ENCODE measurements at regions of chr15 and their contacts with region 1.

Region 1: DNA sequence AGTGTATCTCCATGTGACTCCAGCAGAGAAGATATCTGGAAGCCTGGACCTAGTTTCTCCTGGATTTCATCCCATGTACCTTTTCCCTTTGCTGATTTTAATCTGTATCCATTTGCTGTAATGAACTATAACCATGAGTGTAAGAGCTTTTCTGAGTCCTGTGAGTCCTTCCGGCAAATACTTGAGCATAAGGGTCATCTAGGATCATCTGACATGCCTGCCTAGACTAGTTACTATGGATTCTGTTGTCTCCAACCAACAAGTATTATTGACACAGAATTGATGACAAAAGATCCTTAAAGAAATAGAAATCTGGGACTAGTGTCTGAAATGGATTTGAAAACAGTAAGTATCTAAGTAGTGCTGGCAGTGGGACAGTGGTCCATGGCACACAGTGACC is 11.3 kb upstream of the UBE3A start:
- DNase-seq: no peak
- H3K4me3 ChIP-seq: no peak overlapping the region
- H3K27ac ChIP-seq: no peak overlapping the region
- H3K4me1 ChIP-seq: no peaks in the 10 kb centered on the region
- H3K27me3 ChIP-seq: no peaks in the 10 kb centered on the region
- CTCF ChIP-seq: no peak
- EP300 ChIP-seq: no peak
- POLR2A ChIP-seq: no peak

Region 2: DNA sequence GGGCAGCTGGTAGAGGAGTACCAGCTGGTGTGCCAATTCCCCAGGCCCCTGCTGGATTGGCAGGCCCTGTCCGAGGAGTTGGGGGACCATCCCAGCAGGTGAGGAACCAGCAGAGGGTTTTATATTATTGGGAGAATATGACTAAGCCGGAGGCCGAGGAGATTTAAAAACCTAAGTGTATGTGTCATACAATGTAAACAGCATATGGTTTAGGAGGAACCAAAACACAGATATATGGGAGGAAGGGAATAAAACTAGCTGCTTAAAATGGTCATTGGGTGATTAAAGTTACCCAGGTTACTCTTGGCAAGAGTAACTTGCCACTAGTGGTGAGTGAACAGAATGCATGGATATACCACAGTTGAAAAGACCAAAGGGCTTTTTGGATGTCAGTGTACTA is 473.2 kb before region 1 on chr15:
- intact Hi-C with region 1: no loop called
- DNase-seq: no peak
- H3K4me3 ChIP-seq: no peak overlapping the region
- H3K27ac ChIP-seq: no peak overlapping the region
- H3K4me1 ChIP-seq: no peaks in the 10 kb centered on the region
- H3K27me3 ChIP-seq: no peaks in the 10 kb centered on the region
- CTCF ChIP-seq: no peak
- EP300 ChIP-seq: no peak
- POLR2A ChIP-seq: no peak

Region 3: DNA sequence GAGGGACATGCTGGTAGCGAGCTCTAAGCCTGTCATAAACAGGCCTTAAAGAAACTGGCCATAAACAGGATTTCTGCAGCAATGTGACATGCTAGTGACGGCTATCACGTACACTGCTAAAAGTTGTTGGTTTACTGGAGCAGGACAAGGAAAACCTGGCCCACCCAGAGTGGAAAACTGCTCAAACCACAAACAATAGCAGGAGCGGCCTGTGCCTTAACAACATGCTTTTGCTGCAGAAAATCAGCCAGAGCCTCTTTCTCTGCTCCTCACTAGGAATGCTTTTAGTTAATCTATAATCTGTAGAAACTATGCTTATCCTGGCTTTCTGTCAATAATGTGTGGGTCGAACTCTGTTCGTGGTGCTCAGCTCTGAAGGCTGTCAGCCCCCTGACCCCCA is 191.6 kb after region 1 on chr15:
- intact Hi-C with region 1: loop called in 1 of 4 experiments (anchors 10 kb)
- DNase-seq: no peak
- H3K4me3 ChIP-seq: no peak overlapping the region
- H3K27ac ChIP-seq: no peak overlapping the region
- H3K4me1 ChIP-seq: no peaks in the 10 kb centered on the region
- H3K27me3 ChIP-seq: no peaks in the 10 kb centered on the region
- CTCF ChIP-seq: no peak
- EP300 ChIP-seq: no peak
- POLR2A ChIP-seq: no peak

Measured in ovary (tissue), 10 donors.